CD4-positive, alpha-beta T cell (primary cell): ENCODE measurements at regions of chr9 and their contacts with region 1.

Region 1: GRCh38 chr9:86354011-86354817 is at the start of gene TUT7:
- DNase-seq: peak; percentile 81 to 96 (median 92)
- ATAC-seq: peak; percentile 91
- H3K4me3 ChIP-seq: peak within 1 kb of the TSS; percentile 96
- H3K4me3 Mint-ChIP-seq: peak within 1 kb of the TSS; percentile 99
- H3K27ac ChIP-seq: peak within 1 kb of the TSS; percentile 75 to 82
- H3K27ac Mint-ChIP-seq: peak within 1 kb of the TSS; percentile 83
- H3K4me1 ChIP-seq: peaks cover 26% of the 10 kb centered on the region
- H3K4me1 Mint-ChIP-seq: peaks cover 51% of the 10 kb centered on the region
- H3K27me3 ChIP-seq: no peaks in the 10 kb centered on the region
- H3K27me3 Mint-ChIP-seq: no peaks in the 10 kb centered on the region
- CTCF ChIP-seq: no peak
- total RNA-seq, gene TUT7: 51.9 to 53.8 TPM

Region 2: GRCh38 chr9:85940832-85941621 is 413.2 kb before region 1 on chr9 and contains the start of gene NAA35:
- CTCF ChIA-PET with region 1: no interaction called
- POLR2A ChIA-PET with region 1: no interaction called
- intact Hi-C with region 1: loop called (anchors 5 kb)
- DNase-seq: peak; percentile 98 to 100 (median 99)
- ATAC-seq: peak; percentile 85
- H3K4me3 ChIP-seq: peak within 1 kb of the TSS; percentile 81
- H3K4me3 Mint-ChIP-seq: peak within 1 kb of the TSS; percentile 94
- H3K27ac ChIP-seq: peak within 1 kb of the TSS; percentile 80 to 82
- H3K27ac Mint-ChIP-seq: no peak within 1 kb of the TSS
- H3K4me1 ChIP-seq: peaks cover 24% of the 10 kb centered on the region
- H3K4me1 Mint-ChIP-seq: peaks cover 9% of the 10 kb centered on the region
- H3K27me3 ChIP-seq: no peaks in the 10 kb centered on the region
- H3K27me3 Mint-ChIP-seq: no peaks in the 10 kb centered on the region
- CTCF ChIP-seq: no peak
- total RNA-seq, gene NAA35: 19.4 to 19.8 TPM

Region 3: GRCh38 chr9:86368871-86369521 is 14.8 kb after region 1 on chr9:
- CTCF ChIA-PET with region 1: no interaction called
- POLR2A ChIA-PET with region 1: no interaction called
- intact Hi-C with region 1: no loop called
- DNase-seq: peak in 2 of 14 experiments; percentile 53 to 64
- ATAC-seq: no peak
- H3K4me3 ChIP-seq: no peak overlapping the region
- H3K4me3 Mint-ChIP-seq: no peak overlapping the region
- H3K27ac ChIP-seq: no peak overlapping the region
- H3K27ac Mint-ChIP-seq: no peak overlapping the region
- H3K4me1 ChIP-seq: no peaks in the 10 kb centered on the region
- H3K4me1 Mint-ChIP-seq: no peaks in the 10 kb centered on the region
- H3K27me3 ChIP-seq: peaks cover 0 to 6% of the 10 kb centered on the region in 2 experiments
- H3K27me3 Mint-ChIP-seq: peaks cover 31% of the 10 kb centered on the region
- CTCF ChIP-seq: no peak

Region 4: GRCh38 chr9:86948074-86948929 is 594.1 kb after region 1 on chr9:
- CTCF ChIA-PET with region 1: no interaction called
- POLR2A ChIA-PET with region 1: no interaction called
- intact Hi-C with region 1: loop called in 1 of 2 experiments (anchors 5 kb)
- DNase-seq: peak; percentile 51 to 85 (median 62)
- ATAC-seq: peak; percentile 73
- H3K4me3 ChIP-seq: peak overlapping the region; percentile 71
- H3K4me3 Mint-ChIP-seq: peak overlapping the region; percentile 95
- H3K27ac ChIP-seq: no peak overlapping the region
- H3K27ac Mint-ChIP-seq: peak overlapping the region; percentile 62
- H3K4me1 ChIP-seq: peaks cover 18% of the 10 kb centered on the region
- H3K4me1 Mint-ChIP-seq: peaks cover 25% of the 10 kb centered on the region
- H3K27me3 ChIP-seq: peaks cover 16 to 21% of the 10 kb centered on the region in 2 experiments
- H3K27me3 Mint-ChIP-seq: peaks cover 20% of the 10 kb centered on the region
- CTCF ChIP-seq: peak; percentile 87